ENCODE measurements at regions of chr5 and their contacts with region 1.

Region 1: DNA sequence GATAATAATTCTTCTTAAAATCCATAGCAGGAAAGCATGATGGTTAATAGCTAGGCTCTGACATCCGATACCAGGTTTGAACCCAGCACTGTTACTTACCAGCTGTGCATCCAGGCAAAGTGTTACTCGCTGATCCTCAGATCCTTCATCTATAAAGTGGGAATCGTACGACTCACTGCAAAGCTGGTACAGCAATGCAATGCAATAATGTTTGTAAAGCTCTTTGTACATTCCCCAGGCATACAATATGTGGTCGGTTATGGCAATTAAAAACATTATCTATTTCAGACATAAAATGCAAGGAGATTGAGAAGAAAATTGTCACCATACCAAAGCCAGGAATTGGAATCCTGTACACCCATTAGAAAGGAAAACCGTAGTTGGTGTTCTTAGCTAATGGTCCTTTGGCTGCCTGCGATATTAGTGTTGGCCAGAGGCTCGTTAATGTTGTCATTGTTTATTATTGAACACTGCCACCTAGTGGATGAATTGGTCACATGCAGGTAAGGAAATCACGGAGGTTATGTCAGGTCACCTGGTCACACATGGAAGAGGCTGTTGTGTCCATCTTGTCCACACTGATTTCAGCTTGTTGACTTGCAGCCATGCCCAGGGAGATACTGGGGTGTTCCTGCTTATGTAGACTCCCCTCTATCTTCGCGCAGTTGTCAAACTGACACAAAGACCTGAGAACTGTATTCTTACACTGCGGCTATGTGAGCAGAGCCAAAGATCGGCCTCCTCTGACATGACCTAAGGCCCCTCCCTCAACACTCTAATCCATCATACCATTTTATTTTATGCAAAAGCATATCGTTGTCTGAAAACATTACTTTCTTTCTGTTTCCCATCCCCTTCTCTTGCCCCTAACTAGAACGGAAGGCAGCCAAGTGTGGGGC is 87.5 kb upstream of the PPP2R2B start:
- DNase-seq: no peak
- ATAC-seq: peak; percentile 95

Region 2: GRCh38 chr5:146541958-146542849 is 423.8 kb before region 1 on chr5:
- intact Hi-C with region 1: loop called (anchors 5 kb)
- DNase-seq: peak; percentile 77
- ATAC-seq: peak; percentile 91

Region 3: GRCh38 chr5:146647656-146648199 is 318.3 kb before region 1 on chr5:
- intact Hi-C with region 1: loop called (anchors 10 kb)
- DNase-seq: no peak
- ATAC-seq: no peak

Region 4: GRCh38 chr5:147055850-147056566 is 90.0 kb after region 1 on chr5:
- intact Hi-C with region 1: no loop called
- DNase-seq: no peak
- ATAC-seq: no peak

Region 5: GRCh38 chr5:147267082-147267832 is 301.2 kb after region 1 on chr5:
- intact Hi-C with region 1: no loop called
- DNase-seq: no peak
- ATAC-seq: no peak

Region 6: GRCh38 chr5:147417135-147417813 is 451.3 kb after region 1 on chr5:
- intact Hi-C with region 1: no loop called
- DNase-seq: peak; percentile 53
- ATAC-seq: peak; percentile 85